ENCODE measurements at regions of chr11 and their contacts with region 1.

Region 1: GRCh38 chr11:57155838-57156607 is 25.7 kb upstream of the LRRC55 start:
- DNase-seq: no peak
- H3K4me3 ChIP-seq: no peak overlapping the region
- H3K27ac ChIP-seq: no peak overlapping the region
- H3K4me1 ChIP-seq: peaks cover 4% of the 10 kb centered on the region
- CTCF ChIP-seq: no peak

Region 2: GRCh38 chr11:57133366-57134038 is 22.5 kb before region 1 on chr11:
- CTCF ChIA-PET with region 1: no interaction called
- POLR2A ChIA-PET with region 1: interaction called, 10 read pairs
- intact Hi-C with region 1: no loop called
- DNase-seq: no peak
- H3K4me3 ChIP-seq: no peak overlapping the region
- H3K27ac ChIP-seq: no peak overlapping the region
- H3K4me1 ChIP-seq: no peaks in the 10 kb centered on the region
- CTCF ChIP-seq: no peak

Region 3: DNA sequence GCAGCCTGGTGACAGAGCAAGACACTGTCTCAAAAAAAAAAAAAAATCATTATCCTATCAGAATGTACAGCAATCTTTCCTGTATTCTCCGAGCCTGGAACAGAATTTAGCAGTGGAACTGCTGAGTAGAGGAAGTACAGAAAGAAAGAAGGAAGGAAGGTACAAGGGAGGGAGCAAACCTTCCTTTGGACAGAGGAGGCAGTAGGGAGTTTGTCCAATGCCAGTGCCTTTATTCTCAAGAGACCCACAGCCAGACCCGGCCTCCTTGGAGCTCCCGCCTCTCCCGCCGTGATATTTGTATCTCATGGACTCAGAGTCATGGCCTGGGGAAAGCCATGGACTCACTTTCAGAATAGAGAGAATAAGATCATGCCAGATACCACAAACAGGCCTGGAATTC is 11.9 kb before region 1 on chr11:
- CTCF ChIA-PET with region 1: no interaction called
- POLR2A ChIA-PET with region 1: no interaction called
- intact Hi-C with region 1: no loop called
- DNase-seq: no peak
- H3K4me3 ChIP-seq: no peak overlapping the region
- H3K27ac ChIP-seq: no peak overlapping the region
- H3K4me1 ChIP-seq: no peaks in the 10 kb centered on the region
- CTCF ChIP-seq: no peak

Region 4: GRCh38 chr11:57205041-57205671 is 49.1 kb after region 1 on chr11:
- CTCF ChIA-PET with region 1: no interaction called
- POLR2A ChIA-PET with region 1: no interaction called
- intact Hi-C with region 1: no loop called
- DNase-seq: no peak
- H3K4me3 ChIP-seq: no peak overlapping the region
- H3K27ac ChIP-seq: no peak overlapping the region
- H3K4me1 ChIP-seq: no peaks in the 10 kb centered on the region
- CTCF ChIP-seq: no peak

Measured in OCI-LY7 (cell line).